ENCODE measurements at regions of chr1 and their contacts with region 1.

Region 1: GRCh38 chr1:204072931-204073836 is at the start of gene SOX13:
- DNase-seq: peak; percentile 82
- H3K4me3 Mint-ChIP-seq: peak within 1 kb of the TSS; percentile 84
- H3K27ac Mint-ChIP-seq: peak within 1 kb of the TSS; percentile 55
- H3K4me1 Mint-ChIP-seq: peaks cover 28% of the 10 kb centered on the region
- H3K27me3 Mint-ChIP-seq: peaks cover 5% of the 10 kb centered on the region
- CTCF ChIP-seq: no peak
- total RNA-seq, gene SOX13: 21.8 and 27.9 TPM in 2 replicates

Region 2: GRCh38 chr1:203871107-203871875 is 201.9 kb before region 1 on chr1:
- CTCF ChIA-PET with region 1: interaction called, 4 read pairs
- intact Hi-C with region 1: loop called (anchors 2 kb)
- DNase-seq: peak; percentile 52
- H3K4me3 Mint-ChIP-seq: no peak overlapping the region
- H3K27ac Mint-ChIP-seq: no peak overlapping the region
- H3K4me1 Mint-ChIP-seq: no peaks in the 10 kb centered on the region
- H3K27me3 Mint-ChIP-seq: no peaks in the 10 kb centered on the region
- CTCF ChIP-seq: peak; percentile 91

Measured in Calu3 (cell line).